Posterior cingulate gyrus (tissue), 11 donors: ENCODE measurements at regions of chr2 and their contacts with region 1.

Region 1: DNA sequence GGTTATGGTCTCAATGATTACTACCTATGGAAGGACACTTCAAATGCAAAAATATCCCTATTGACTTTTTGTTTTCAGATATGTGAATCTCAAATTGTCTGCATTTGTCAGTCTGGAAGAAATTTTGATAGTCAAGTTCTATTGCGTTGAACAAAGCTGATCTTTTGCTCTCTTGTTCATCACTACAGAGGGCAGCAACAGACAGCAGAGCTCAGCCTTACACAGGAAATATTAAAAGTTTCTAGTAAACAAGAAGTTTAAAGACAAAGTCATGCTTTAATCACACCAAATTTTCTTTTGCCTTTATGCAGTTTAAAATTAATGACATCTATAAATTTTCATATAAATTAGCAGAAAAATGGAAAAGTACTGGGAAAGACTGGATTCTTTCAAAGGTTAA is 617.5 kb downstream of the NR4A2 start:
- DNase-seq: no peak

Region 2: GRCh38 chr2:155815886-155816285 is 100.9 kb after region 1 on chr2:
- intact Hi-C with region 1: loop called (anchors 10 kb)
- DNase-seq: peak in 4 of 10 donors; percentile 6 to 72 (median 36)

Region 3: DNA sequence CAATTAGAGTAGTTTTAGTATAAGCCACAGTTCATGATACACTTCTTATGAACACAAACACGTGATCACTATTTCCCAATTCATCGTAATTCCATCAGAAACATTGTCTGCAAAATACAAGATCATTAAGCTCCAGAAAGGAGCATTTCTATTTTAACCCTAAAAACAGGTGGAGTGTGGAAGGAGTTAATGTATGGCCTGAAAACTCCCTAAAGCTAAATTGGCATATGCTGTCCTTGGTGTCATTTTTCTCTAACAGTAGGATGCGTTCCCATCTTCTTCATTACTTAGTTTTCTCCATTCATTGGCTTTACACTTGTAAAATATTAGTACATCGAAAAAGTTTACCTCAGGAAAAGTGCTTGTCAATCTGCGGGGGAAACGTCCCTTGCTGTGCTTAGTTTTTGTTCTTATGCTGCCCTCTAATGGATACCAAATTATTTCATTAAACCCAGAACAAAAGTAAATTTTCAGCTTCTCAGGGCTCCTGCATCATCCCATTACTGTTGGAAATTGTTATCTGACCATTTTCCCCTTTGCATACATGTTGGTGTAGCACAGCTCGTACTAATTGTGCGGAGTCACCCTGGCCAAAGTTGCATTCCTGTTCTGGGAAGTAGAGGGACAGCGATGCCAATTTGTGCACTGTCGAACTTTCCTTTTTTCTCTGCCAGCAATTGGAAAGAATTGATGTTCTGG is 874.5 kb after region 1 on chr2:
- intact Hi-C with region 1: loop called (anchors 10 kb)
- DNase-seq: peak in 1 of 10 donors; percentile 28